ENCODE measurements at regions of chr11 and their contacts with region 1.

Region 1: DNA sequence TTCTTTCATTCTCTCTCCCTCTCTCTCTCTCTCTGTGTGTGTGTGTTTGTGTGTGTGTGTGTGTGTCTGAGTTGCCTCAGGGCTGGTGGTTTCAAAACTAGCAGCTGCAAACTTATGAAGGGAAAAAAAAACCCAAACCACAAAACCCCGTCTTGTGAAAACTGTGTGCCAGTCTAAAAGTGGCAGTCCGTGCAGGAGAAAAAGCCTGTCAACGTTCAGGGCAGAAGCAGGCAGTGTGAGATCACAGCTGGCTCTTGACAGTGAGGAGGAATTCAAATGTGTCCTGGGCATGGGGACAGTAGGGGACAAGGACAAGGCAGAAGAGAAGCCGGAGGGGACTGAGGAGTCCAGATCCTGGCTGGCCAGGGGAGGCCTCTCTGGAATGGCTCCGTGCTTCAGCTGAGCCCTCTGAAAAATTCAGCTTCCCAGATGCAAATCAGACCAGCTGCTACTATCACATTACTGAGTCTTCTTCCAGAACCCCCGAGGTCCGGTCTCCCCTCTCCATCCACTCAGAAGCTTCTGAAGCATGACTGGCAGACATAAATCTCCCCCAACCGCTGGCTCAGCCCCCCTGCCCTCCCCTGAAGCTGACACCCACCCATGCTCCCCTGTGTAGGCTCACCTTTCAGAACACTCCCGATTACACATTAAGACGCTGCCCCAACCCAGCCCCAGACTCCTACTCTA is 31.9 kb downstream of the FLI1 start:
- DNase-seq: peak; percentile 68
- H3K4me3 Mint-ChIP-seq: peak overlapping the region; percentile 67
- H3K27ac Mint-ChIP-seq: peak overlapping the region; percentile 95
- H3K4me1 Mint-ChIP-seq: peaks cover 98% of the 10 kb centered on the region
- H3K27me3 Mint-ChIP-seq: no peaks in the 10 kb centered on the region

Region 2: GRCh38 chr11:128745311-128746136 is 19.7 kb after region 1 on chr11:
- CTCF ChIA-PET with region 1: no interaction called
- POLR2A ChIA-PET with region 1: interaction called, 67 read pairs
- DNase-seq: no peak
- H3K4me3 Mint-ChIP-seq: no peak overlapping the region
- H3K27ac Mint-ChIP-seq: peak overlapping the region; percentile 17
- H3K4me1 Mint-ChIP-seq: peaks cover 61% of the 10 kb centered on the region
- H3K27me3 Mint-ChIP-seq: no peaks in the 10 kb centered on the region

Region 3: DNA sequence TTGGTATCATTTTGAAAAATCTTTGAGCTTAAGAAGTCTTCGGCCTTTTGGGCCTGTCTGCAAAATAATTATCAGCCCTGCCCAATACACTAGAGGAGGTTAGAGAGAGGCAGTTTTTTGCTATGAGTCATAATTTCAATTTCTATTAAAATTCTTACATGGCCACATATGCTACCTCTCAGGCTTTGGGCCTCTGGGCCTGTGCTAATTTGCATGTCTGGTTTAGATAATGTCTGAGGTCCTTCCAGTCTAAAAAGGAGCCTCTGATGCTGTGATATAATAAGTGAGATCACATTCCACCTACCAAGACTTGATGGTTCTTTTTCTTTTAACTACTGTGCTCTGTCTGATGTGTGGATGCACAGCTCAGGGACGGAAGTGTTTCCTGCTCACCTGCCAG is 70.5 kb after region 1 on chr11:
- CTCF ChIA-PET with region 1: no interaction called
- POLR2A ChIA-PET with region 1: no interaction called
- DNase-seq: no peak
- H3K4me3 Mint-ChIP-seq: no peak overlapping the region
- H3K27ac Mint-ChIP-seq: no peak overlapping the region
- H3K4me1 Mint-ChIP-seq: peaks cover 13% of the 10 kb centered on the region
- H3K27me3 Mint-ChIP-seq: no peaks in the 10 kb centered on the region